ENCODE measurements at regions of chr4 and their contacts with region 1.

Region 1: GRCh38 chr4:174156239-174156826 is 127.1 kb downstream of the FBXO8 start:
- DNase-seq: no peak
- ATAC-seq: no peak

Region 2: DNA sequence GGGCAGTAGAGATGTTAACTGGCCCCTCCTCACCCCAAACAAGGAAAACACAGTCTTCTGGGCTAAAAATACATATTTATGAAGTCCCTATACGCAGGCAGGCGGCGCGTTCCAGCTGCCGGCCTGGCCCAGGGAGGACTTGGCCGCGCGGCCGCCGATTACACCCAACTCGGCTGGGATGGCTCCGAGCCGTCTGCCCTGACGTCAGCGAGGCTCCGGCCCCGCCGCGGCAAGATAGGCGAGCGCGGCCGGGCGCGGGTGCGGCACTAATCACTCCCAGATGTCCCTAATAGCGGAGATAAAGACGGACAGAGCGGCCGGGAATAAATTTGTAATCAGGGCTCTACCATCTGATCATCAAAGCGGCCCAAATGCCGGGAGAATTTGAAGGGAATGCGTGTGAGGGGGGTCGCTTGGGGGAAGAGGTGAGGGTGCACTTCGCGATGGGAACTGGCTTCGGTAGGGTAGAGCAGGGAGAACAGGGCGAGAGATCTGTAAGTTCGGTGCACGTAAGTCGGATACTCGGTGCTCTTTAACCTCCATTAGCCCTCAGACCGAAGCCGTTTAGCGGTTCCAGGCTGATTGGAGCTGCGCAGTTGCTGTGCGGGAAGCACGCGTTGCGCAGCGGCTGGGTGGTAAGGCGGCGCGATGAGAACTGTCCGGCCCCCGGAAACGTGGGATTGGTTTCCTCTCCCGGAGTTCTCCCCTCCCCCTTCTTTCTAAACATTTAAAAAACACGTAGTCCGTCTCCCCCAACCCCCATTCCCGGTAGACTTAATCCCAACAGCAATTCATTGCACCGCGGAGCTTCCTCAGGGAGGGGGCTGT is 634.0 kb before region 1 on chr4:
- intact Hi-C with region 1: loop called (anchors 10 kb)
- DNase-seq: peak; percentile 87
- ATAC-seq: peak; percentile 95

Region 3: GRCh38 chr4:174358829-174359228 is 202.5 kb after region 1 on chr4:
- intact Hi-C with region 1: no loop called
- DNase-seq: no peak
- ATAC-seq: no peak

Region 4: DNA sequence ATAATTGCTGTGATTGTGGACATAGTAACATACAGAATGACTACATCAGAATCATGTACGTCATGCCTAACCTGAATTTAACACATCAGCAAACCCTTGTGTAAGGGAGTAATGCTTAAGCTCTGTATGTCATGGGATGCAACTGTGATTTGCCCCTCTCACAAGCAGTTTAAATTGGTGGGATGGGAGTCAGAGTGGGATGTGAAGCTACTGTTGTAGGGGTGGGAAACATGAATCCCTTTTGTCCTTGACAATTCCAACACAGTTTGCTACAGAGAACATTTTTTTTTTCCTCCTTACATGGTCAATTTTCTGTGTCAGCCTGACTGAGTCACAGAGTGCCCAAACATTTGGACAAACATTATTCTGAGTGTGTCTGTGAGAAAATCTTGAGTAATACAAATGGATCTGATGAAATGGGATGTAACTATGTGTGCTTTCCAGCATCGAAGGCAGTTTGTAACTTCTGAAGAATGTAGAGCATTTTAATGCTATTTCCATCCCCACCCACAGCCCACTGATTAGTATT is 1263.0 kb after region 1 on chr4:
- intact Hi-C with region 1: no loop called
- DNase-seq: no peak
- ATAC-seq: peak; percentile 20

Measured in sciatic nerve (tissue), 2 donors.